Dorsolateral prefrontal cortex (tissue), 120 donors: ENCODE measurements at regions of chr21 and their contacts with region 1.

Region 1: GRCh38 chr21:38733973-38734546 is 71.7 kb upstream of the ETS2 start:
- DNase-seq: peak; percentile 59 to 93 (median 86)
- H3K4me3 ChIP-seq: peak overlapping the region; percentile 20 to 68 (median 53)
- H3K27ac ChIP-seq: peak overlapping the region in 46 of 59 donors; percentile 11 to 80 (median 59)
- H3K27me3 ChIP-seq: peaks cover 0 to 2% (median 0%) of the 10 kb centered on the region in 45 donors
- CTCF ChIP-seq: peak; percentile 77 to 98 (median 94)

Region 2: DNA sequence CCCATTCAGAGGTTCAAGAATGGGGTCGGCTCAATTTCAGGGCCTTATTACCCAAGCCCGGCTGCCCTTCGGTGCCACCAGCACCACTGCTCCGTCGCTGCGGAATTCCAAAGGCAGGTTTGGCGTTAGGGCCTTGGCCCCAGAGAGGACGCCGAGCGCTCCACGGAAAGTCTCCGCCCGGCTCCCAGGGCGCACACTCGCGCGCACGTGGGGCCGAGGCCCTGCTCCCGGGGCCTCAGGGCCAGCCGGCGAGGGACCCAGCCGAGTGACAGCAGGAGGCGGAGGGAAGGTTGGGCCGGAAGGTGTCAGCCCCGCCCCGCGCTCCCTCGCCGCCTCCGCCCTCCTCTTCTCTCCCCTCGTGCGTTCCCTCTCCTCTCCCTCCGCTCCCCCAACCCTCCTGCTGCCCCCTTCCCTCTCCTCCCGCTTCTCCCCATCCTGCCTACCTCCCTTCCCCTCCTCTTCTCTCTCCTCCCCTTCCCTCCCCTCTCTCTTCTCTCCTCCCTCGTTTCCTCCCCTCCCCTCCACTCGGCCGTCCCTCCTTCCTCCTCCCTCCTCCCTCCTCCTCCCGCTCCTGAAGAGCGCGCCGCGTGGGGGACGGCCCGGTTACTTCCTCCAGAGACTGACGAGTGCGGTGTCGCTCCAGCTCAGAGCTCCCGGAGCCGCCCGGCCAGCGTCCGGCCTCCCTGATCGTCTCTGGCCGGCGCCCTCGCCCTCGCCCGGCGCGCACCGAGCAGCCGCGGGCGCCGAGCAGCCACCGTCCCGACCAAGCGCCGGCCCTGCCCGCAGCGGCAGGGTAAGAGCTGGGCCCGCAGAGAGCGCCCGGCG is 71.5 kb after region 1 on chr21 and contains the start of gene ETS2:
- intact Hi-C with region 1: loop called (anchors 2 to 5 kb)
- DNase-seq: peak in 9 of 10 donors; percentile 48 to 89 (median 78)
- H3K4me3 ChIP-seq: peak within 1 kb of the TSS; percentile 47 to 90 (median 78)
- H3K27ac ChIP-seq: peak within 1 kb of the TSS in 58 of 59 donors; percentile 67 to 98 (median 92)
- H3K27me3 ChIP-seq: peaks cover 0 to 7% (median 0%) of the 10 kb centered on the region in 45 donors
- CTCF ChIP-seq: peak in 13 of 56 donors; percentile 2 to 40 (median 10)
- total RNA-seq, gene ETS2: 47.9 to 194 (median 111) TPM

Region 3: DNA sequence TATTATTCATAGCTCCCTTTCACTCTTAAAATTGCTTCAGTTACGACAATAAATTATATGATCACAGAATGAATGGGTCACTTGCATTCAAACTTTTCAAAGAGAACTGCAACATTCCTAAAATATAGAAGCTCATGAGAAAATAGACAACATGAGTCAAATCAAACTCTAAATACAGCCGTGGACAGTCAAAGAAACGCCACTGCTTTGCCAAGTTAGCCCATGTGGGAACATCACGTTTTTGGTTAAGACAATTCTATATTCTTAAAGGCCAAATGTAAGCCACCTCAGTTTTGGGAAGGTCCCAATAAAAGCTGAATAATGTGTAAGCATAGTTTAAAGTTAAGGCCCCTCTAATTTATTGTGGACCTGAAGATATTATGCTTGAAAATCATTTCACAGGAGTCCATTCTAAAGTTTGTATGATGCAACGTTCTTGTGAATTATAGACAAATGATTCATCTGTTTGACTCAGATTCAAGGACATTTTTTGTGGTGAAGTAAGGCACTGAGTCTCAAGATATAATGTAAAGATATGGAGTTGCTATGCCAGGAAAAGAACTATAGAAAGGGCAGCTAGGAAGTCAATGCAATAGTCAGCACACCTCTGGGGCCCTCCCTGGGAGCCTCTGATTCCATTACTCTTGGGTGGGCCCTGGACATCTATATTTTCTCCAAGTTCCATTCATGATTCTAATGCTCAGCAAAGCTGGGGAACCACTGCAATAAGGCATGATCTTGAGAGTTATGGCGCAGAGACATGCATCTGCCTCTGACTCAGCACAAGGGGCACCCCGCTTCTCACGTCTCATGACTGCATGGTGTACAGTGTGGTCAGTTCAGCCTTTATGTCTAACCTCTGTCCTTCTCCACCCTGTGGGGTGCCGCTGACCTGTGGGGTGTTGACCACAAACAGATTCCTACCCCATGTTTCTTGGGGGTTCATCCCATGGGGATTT is 105.5 kb after region 1 on chr21:
- intact Hi-C with region 1: no loop called
- DNase-seq: no peak
- H3K4me3 ChIP-seq: no peak overlapping the region
- H3K27ac ChIP-seq: peak overlapping the region in 5 of 59 donors; percentile 21 to 51 (median 46)
- H3K27me3 ChIP-seq: no peaks in the 10 kb centered on the region
- CTCF ChIP-seq: no peak

Region 4: GRCh38 chr21:39125752-39126485 is 391.9 kb after region 1 on chr21:
- intact Hi-C with region 1: loop called in 1 of 2 experiments (anchors 5 kb)
- DNase-seq: peak in 1 of 10 donors; percentile 49
- H3K4me3 ChIP-seq: no peak overlapping the region
- H3K27ac ChIP-seq: no peak overlapping the region
- H3K27me3 ChIP-seq: no peaks in the 10 kb centered on the region
- CTCF ChIP-seq: peak; percentile 28 to 69 (median 56)

Region 5: GRCh38 chr21:39137248-39138178 is 403.5 kb after region 1 on chr21:
- intact Hi-C with region 1: loop called (anchors 5 kb)
- DNase-seq: no peak
- H3K4me3 ChIP-seq: no peak overlapping the region
- H3K27ac ChIP-seq: no peak overlapping the region
- H3K27me3 ChIP-seq: no peaks in the 10 kb centered on the region
- CTCF ChIP-seq: no peak

Region 6: GRCh38 chr21:39388038-39388810 is 654.2 kb after region 1 on chr21:
- intact Hi-C with region 1: loop called in 1 of 2 experiments (anchors 1 kb)
- DNase-seq: peak; percentile 83 to 95 (median 90)
- H3K4me3 ChIP-seq: peak overlapping the region; percentile 28 to 69 (median 57)
- H3K27ac ChIP-seq: peak overlapping the region in 48 of 59 donors; percentile 2 to 95 (median 76)
- H3K27me3 ChIP-seq: no peaks in the 10 kb centered on the region
- CTCF ChIP-seq: peak; percentile 76 to 98 (median 94)